Psoas muscle (tissue), 8 donors: ENCODE measurements at regions of chr13 and their contacts with region 1.

Region 1: GRCh38 chr13:103331924-103332323 is 265.7 kb upstream of the SLC10A2 start:
- DNase-seq: no peak
- ATAC-seq: no peak
- H3K4me3 ChIP-seq: no peak overlapping the region
- H3K27ac ChIP-seq: no peak overlapping the region
- H3K4me1 ChIP-seq: no peaks in the 10 kb centered on the region
- H3K27me3 ChIP-seq: no peaks in the 10 kb centered on the region
- CTCF ChIP-seq: no peak

Region 2: DNA sequence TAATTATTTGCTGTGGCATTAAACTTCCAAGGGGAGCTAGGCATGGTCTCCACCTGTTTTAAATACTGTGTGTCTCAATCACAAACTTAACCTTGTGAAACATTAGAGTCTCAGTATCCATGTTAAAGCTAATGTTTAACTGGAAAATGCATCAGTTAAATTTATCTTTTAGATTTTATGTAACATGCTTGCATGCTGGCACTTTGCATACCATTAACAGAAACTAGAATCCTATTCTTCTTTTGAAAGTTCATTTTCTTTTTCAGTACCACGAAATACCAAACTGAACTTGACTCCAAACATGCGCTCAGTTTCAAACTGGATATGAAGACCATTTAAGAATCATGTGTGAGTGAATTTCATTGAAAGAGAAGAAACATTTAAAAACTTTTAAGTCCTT is 63.2 kb after region 1 on chr13:
- intact Hi-C with region 1: loop called in 1 of 2 experiments (anchors 10 kb)
- DNase-seq: no peak
- ATAC-seq: no peak
- H3K4me3 ChIP-seq: no peak overlapping the region
- H3K27ac ChIP-seq: no peak overlapping the region
- H3K4me1 ChIP-seq: no peaks in the 10 kb centered on the region
- H3K27me3 ChIP-seq: no peaks in the 10 kb centered on the region
- CTCF ChIP-seq: no peak

Region 3: GRCh38 chr13:104625201-104625600 is 1293.3 kb after region 1 on chr13:
- intact Hi-C with region 1: no loop called
- DNase-seq: no peak
- ATAC-seq: no peak
- H3K4me3 ChIP-seq: no peak overlapping the region
- H3K27ac ChIP-seq: no peak overlapping the region
- H3K4me1 ChIP-seq: no peaks in the 10 kb centered on the region
- H3K27me3 ChIP-seq: no peaks in the 10 kb centered on the region
- CTCF ChIP-seq: no peak